Motor neuron (in vitro differentiated cells): ENCODE measurements at regions of chr1 and their contacts with region 1.

Region 1: DNA sequence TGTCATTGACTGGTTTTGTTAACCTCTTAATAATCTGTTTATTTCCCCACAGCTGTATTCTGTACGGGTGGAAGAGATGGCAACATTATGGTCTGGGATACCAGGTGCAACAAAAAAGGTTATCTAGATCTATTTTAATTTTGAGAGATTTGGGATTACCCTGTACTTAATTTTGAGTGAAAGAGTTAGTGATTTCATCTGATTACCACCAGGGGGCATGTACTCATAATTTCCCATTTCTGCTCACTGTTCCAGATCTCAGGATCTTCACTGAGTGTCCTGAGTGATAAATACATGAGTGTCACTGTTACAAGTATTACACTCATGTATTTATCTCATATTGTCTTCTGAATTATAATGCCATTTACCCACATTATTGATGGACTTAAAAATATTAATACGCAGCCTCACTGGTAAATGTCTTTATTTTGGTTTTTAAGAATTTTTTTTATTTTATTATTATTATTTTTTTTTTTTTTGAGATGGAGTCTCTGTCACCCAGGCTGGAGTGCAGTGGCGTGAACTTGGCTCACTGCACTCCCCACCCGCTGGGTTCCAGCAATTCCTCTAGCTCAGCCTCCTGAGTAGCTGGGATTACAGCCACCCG is 27.4 kb downstream of the DTL start:
- ATAC-seq: peak in 7 of 8 experiments; percentile 34 to 74 (median 43)
- H3K4me3 ChIP-seq: no peak overlapping the region
- H3K27ac ChIP-seq: no peak overlapping the region
- H3K4me1 ChIP-seq: no peaks in the 10 kb centered on the region

Region 2: DNA sequence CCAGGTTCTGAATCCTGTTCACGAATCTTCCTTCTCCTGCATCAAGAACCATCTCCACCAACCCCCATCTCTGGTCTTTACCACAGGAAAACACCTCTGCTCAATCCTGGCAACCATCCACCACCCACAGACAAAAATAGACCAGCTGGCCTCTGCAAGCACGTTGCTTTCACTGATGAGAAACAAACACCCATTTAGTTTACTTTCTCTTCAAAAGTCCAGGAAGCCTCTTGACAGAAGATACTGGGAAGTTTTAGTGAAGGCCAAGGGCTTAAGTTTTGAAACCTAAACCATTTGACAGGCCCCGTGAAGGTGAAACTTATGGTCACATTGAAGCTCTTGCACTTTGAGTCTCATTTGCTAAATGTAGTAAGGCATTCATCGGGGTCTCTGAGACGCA is 99.7 kb after region 1 on chr1:
- in situ Hi-C with region 1: no loop called
- ATAC-seq: no peak
- H3K4me3 ChIP-seq: no peak overlapping the region
- H3K27ac ChIP-seq: no peak overlapping the region
- H3K4me1 ChIP-seq: peaks cover 0 to 3% of the 10 kb centered on the region in 2 donors

Region 3: DNA sequence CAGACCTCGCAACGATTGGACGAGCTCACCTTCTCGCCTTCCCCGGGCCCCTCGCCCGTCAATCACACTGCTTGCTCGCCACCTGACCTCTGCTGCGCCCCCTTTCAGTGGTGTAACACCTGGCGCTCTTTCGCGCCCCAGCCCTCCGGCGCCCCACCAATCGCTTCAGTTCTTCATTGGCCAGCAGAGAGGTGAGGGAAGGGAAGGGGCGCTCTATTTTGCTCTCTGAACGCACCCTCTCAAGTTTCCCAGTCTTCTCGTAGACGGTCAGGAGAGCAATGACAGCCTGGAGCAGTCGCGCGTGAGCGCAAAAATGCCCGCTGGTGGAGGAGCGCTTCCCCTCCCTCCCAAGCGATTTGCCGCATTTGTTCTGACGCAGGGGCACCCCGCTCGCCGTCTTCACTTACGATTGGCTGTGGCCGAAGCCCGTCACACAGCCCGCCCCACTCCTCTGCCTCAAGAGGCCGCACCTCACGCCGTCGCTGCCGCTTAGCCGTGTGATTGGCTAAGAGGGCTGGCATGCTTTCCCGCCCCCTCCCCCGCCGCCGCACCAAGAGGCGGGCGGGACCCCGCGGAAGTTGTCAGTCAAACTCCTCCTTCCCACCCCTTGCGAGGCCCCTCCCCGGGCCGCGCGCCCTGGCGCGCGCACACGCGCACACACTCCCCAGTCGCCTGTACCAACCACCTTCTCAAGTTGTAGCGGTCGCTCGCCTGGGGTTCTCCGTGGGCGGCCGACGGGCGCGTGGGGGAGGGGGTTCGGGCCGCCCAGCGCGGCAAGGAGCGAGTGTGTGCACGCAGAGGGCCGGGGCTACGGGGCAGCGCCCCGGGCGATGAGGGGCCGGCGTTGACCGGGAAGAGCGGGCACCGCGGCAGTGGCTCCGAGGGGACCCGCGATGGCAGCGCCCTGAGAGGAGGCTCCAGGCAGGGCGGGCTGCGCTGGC is 222.1 kb after region 1 on chr1 and contains the start of gene PPP2R5A:
- in situ Hi-C with region 1: loop called in 1 of 9 experiments (anchors 25 kb)
- ATAC-seq: peak; percentile 90 to 96 (median 95)
- H3K4me3 ChIP-seq: peak within 1 kb of the TSS; percentile 73 to 88 (median 79)
- H3K27ac ChIP-seq: peak within 1 kb of the TSS; percentile 0 to 66
- H3K4me1 ChIP-seq: peaks cover 3 to 10% of the 10 kb centered on the region in 2 donors
- total RNA-seq, gene PPP2R5A: 6.3 to 14.6 (median 10.1) TPM

Region 4: DNA sequence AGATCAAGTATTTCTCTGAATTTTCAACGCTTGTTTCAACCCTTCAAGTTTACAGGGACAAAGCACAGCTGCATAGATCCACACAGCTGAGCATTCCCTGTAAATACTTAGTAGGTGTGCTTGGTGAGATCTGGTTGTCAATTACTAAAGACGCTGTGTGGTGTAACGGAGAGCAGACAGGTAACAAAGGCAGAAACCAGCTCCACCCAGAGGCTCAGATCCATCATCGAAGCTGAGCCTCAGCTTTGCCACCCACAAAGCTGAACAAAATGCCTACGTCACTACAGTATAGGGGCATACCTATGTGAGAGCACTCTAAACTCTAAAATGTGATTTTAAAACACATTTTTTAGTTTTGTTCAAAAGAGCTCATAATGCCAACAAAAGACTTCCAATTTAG is 313.1 kb after region 1 on chr1:
- in situ Hi-C with region 1: loop called in 2 of 9 experiments (anchors 10 kb)
- ATAC-seq: no peak
- H3K4me3 ChIP-seq: no peak overlapping the region
- H3K27ac ChIP-seq: no peak overlapping the region
- H3K4me1 ChIP-seq: no peaks in the 10 kb centered on the region